OCI-LY7 (cell line): ENCODE measurements at regions of chr4 and their contacts with region 1.

Region 1: GRCh38 chr4:143335979-143336780 is 496 bp upstream of the GAB1 start:
- DNase-seq: peak; percentile 74
- H3K4me3 ChIP-seq: peak overlapping the region; percentile 94
- H3K27ac ChIP-seq: peak overlapping the region; percentile 59
- H3K4me1 ChIP-seq: peaks cover 43% of the 10 kb centered on the region
- CTCF ChIP-seq: no peak

Region 2: DNA sequence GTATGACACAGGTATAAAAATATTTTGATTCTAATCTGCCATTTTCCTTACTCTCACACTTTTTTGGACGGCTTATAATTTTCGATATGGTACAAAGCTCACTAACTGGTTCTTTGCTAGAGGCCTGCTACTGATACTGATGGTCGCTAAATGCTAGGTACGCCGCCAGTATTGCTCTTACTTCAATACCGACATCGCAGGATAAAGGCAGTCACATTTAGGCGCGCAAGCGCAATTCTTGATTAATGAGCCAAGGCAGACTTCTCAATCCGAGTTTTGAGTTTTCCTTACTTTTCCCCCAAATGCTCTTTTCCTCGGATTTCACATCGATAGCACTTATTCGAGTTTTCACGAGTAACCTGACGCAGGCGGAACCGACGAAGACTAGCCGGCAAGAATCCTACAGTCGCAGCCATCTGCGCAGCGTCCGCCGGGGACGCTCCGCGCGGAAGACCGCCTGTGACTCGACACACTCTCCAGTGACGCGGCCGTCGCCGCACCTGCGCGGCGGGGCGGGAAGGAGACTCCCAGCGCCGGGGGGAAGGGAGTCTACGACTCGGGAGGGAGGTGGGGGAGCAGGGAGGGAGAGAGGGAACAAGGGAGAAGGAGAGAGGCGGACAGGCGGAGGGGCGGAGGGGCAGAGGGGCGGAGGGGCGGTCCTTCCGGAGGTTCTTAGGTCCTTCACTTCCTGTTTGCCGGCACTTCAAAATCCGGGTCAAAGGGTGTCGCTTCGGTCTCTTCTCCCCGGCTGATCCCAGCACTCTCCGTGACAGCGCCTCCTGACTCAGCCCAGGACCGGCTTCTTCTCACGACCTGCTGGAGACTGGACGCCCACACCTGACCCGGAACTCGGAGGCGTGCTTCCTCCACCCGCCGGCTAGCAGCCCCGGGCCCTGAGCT is 151.7 kb before region 1 on chr4 and contains the start of gene USP38:
- CTCF ChIA-PET with region 1: no interaction called
- POLR2A ChIA-PET with region 1: interaction called, 3 read pairs
- intact Hi-C with region 1: loop called (anchors 1 kb)
- DNase-seq: peak; percentile 90
- H3K4me3 ChIP-seq: peak within 1 kb of the TSS; percentile 94
- H3K27ac ChIP-seq: peak within 1 kb of the TSS; percentile 75
- H3K4me1 ChIP-seq: peaks cover 29% of the 10 kb centered on the region
- CTCF ChIP-seq: 0 out of 2 replicates have a peak, but pooled peaks have one; percentile 46
- total RNA-seq, gene USP38: 21.8 and 23.6 TPM in 2 replicates

Region 3: GRCh38 chr4:143389579-143390195 is 53.5 kb after region 1 on chr4:
- CTCF ChIA-PET with region 1: interaction called, 3 read pairs
- POLR2A ChIA-PET with region 1: interaction called, 9 read pairs
- intact Hi-C with region 1: loop called (anchors 5 kb)
- DNase-seq: no peak
- H3K4me3 ChIP-seq: peak overlapping the region; percentile 5
- H3K27ac ChIP-seq: peak overlapping the region; percentile 96
- H3K4me1 ChIP-seq: peaks cover 80% of the 10 kb centered on the region
- CTCF ChIP-seq: no peak

Region 4: DNA sequence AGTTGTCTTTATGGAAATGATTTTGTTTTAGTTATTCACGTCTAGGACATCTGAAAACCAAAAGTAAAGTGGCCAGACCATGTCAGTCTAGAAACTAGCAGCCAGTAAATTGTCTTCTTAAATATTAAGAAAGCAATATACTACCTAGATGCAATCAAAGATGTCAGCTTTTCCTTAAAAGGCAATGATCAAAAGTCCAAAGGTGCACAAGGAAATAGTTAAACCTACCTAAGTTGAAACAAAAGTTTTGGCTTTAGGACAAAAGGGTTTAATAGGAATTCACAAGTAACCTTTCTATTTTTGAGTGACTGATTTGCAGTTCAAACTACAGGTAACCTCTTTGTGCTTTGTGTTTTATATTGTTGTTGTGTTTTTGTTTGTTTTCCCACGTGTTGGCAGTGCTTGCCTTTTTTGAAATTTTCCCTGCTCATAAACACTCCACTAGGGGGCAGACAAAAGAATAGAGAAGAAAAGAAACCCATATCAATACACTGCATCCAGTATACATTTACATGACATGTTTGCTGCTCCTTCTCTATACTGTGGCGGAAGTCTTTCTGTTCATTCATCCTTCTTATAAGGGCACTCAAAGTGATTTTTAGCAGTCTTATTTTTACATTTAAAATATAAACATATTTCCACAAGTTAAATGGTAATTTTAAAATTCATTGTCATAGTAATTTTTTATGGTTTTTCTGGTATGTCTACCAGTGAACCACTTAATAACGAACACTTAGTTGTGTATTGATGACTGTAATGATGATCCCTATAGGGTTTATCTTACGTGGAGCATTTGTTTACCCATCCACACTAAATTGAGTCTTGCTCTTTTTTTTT is 63.2 kb after region 1 on chr4:
- CTCF ChIA-PET with region 1: interaction called, 3 read pairs
- POLR2A ChIA-PET with region 1: interaction called, 11 read pairs
- intact Hi-C with region 1: loop called (anchors 2 kb)
- DNase-seq: peak; percentile 72
- H3K4me3 ChIP-seq: peak overlapping the region; percentile 12
- H3K27ac ChIP-seq: peak overlapping the region; percentile 97
- H3K4me1 ChIP-seq: peaks cover 99% of the 10 kb centered on the region
- CTCF ChIP-seq: peak; percentile 97